ENCODE measurements at regions of chr17 and their contacts with region 1.

Region 1: GRCh38 chr17:40340880-40341807 is 23.4 kb downstream of the GJD3 start:
- DNase-seq: peak; percentile 85
- ATAC-seq: peak; percentile 81
- H3K4me3 Mint-ChIP-seq: peak overlapping the region; percentile 84
- H3K27ac Mint-ChIP-seq: peak overlapping the region; percentile 87
- H3K4me1 Mint-ChIP-seq: peaks cover 65% of the 10 kb centered on the region
- H3K27me3 Mint-ChIP-seq: no peaks in the 10 kb centered on the region

Region 2: DNA sequence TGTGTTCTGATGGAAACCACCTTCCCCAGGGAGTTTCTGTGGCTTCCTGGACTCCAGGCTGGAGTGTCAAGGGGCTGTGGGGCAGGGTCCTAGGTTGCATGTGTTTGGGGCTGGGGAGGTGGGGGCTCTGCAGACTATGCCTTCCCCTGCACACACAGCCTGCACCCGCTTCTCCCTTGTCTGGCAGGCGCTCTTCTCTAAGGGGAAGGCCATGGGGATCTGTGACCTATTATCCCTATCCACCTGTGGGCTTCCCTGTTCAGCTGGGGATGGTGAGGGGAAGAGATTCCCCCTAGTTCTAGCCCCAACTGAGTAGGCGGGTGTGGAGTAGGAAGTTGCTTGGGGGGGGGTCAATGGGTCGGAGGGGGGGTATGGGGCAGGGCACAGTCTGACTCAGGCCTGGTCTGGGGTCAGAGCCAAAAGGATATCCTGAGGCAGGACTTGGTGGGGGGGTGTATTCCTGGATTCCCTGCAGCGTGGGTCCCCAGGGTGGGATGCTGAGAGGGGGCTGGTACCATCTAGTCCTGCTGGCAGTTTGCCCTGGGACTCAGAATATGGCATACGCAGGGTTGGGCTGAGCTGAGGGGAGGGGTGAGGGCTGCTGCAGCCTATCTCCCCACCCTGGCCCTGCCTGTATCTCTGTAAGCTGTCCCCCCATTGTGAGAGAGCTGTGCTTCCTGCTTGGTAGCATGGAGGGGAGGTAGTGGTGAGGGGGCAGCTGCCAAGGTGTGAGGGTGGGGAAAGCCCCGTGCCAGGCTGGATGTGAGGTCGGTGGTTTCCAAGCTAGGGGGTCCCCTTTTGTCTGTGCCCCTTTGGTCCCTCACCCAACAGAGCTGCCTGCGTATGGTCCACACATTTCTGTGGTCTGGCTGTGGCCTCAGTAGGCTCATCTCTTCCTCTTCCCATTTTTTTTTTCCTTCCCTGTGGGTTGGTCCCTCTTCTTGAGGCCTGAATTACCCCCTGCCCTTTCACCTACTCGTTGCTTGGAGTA is 17.5 kb before region 1 on chr17:
- POLR2A ChIA-PET with region 1: interaction called, 170 read pairs
- DNase-seq: no peak
- ATAC-seq: peak; percentile 16
- H3K4me3 Mint-ChIP-seq: peak overlapping the region; percentile 99
- H3K27ac Mint-ChIP-seq: peak overlapping the region; percentile 98
- H3K4me1 Mint-ChIP-seq: peaks cover 72% of the 10 kb centered on the region
- H3K27me3 Mint-ChIP-seq: no peaks in the 10 kb centered on the region

Region 3: DNA sequence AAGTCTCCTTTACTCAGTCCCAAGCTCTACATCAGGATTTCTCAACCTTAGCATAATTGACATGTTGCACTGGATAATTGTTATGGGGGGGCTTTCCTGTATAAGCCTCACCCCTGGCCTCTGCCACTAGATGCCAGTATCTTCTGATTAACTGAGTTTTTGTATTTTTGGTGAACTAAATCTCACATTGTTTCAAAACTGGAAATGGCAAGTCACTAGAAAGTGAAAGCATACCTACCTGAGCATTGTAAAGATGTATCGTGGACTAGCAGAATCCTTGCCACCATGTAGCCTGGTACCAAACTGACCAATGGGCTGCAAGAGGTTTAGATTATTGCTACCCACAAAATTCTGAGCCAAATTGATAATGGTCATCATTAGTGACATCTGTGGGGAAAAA is 61.5 kb after region 1 on chr17:
- POLR2A ChIA-PET with region 1: no interaction called
- DNase-seq: no peak
- ATAC-seq: no peak
- H3K4me3 Mint-ChIP-seq: peak overlapping the region; percentile 35
- H3K27ac Mint-ChIP-seq: peak overlapping the region; percentile 65
- H3K4me1 Mint-ChIP-seq: peaks cover 18% of the 10 kb centered on the region
- H3K27me3 Mint-ChIP-seq: no peaks in the 10 kb centered on the region

Region 4: GRCh38 chr17:40678902-40679522 is 337.9 kb after region 1 on chr17:
- POLR2A ChIA-PET with region 1: no interaction called
- DNase-seq: no peak
- ATAC-seq: no peak
- H3K4me3 Mint-ChIP-seq: no peak overlapping the region
- H3K27ac Mint-ChIP-seq: no peak overlapping the region
- H3K4me1 Mint-ChIP-seq: peaks cover 8% of the 10 kb centered on the region
- H3K27me3 Mint-ChIP-seq: peaks cover 54% of the 10 kb centered on the region